ENCODE measurements at regions of chr17 and their contacts with region 1.

Region 1: GRCh38 chr17:59837308-59838051 is 55.3 kb downstream of the TUBD1 start:
- H3K4me3 Mint-ChIP-seq: peak overlapping the region; percentile 93
- H3K27ac Mint-ChIP-seq: peak overlapping the region; percentile 100
- H3K4me1 Mint-ChIP-seq: peaks cover 17% of the 10 kb centered on the region
- H3K27me3 Mint-ChIP-seq: no peaks in the 10 kb centered on the region

Region 2: GRCh38 chr17:59804901-59805465 is 32.5 kb before region 1 on chr17:
- intact Hi-C with region 1: loop called (anchors 2 kb)
- H3K4me3 Mint-ChIP-seq: peak overlapping the region; percentile 63
- H3K27ac Mint-ChIP-seq: peak overlapping the region; percentile 89
- H3K4me1 Mint-ChIP-seq: peaks cover 25% of the 10 kb centered on the region
- H3K27me3 Mint-ChIP-seq: no peaks in the 10 kb centered on the region

Region 3: GRCh38 chr17:59853168-59853918 is 15.9 kb after region 1 on chr17:
- intact Hi-C with region 1: no loop called
- H3K4me3 Mint-ChIP-seq: no peak overlapping the region
- H3K27ac Mint-ChIP-seq: no peak overlapping the region
- H3K4me1 Mint-ChIP-seq: peaks cover 78% of the 10 kb centered on the region
- H3K27me3 Mint-ChIP-seq: no peaks in the 10 kb centered on the region

Measured in dendritic cell treated with granulocyte-macrophage colony-stimulating factor and Interleukin-4, amounts not matched to agents 40 ng/mL and 50 ng/mL, for 4 days (primary cell).